K562 (cell line): ENCODE measurements at regions of chr11 and their contacts with region 1.

Region 1: DNA sequence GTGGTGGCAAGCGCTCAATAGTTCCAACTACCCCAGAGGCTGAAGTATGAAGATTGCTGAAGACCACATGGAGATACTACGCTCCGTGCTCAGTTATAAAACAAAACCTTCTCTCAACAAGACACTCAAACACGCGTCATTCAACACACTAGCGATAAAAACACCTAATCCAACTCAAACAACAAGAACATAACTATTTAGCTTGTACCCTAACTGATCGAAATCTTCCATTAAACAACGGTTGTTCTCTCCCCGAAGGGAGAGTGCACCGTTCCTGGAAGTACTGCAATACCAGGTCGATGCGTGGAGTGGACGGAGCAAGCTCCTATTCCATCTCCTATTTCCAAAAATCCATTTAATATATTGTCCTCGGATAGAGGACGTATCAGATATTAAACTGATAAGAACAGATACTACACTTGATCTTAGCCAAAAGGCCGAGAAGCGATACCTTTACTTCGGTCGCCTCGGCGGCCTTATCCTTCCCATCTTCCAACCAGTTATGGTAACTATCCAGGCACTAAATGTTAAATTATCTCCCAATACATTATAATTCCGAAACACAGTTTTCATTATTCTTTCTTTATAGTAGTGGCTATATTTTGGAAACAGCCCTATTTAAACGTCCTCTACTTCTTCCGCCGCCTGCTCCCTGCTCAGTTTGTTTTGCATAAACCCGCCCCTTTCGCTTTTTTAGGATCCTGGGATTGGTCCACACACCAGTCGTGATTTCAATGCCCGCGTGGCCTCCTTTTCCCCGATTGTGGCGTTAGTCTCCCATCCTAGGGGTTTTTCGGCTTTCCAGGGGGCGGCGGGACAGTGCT is 2.2 kb upstream of the WDR74 start:
- DNase-seq: peak; percentile 81 to 96 (median 88)
- ATAC-seq: peak; percentile 89
- H3K4me3 ChIP-seq: peak overlapping the region; percentile 33
- H3K27ac ChIP-seq: peak overlapping the region; percentile 89
- H3K4me1 ChIP-seq: peaks cover 8 to 19% of the 10 kb centered on the region in 2 experiments; a peak in 3 of 5 replicates
- H3K27me3 ChIP-seq: no peaks in the 10 kb centered on the region
- CTCF ChIP-seq: 0 out of 6 replicates have a peak, but pooled peaks of 2 of the 3 experiments have one; percentile 3 to 10
- EP300 ChIP-seq: peak; percentile 82
- POLR2A ChIP-seq: peak; percentile 100
- RAD21 ChIP-seq: peak; percentile 33 to 74; a peak in 3 of 4 replicates

Region 2: DNA sequence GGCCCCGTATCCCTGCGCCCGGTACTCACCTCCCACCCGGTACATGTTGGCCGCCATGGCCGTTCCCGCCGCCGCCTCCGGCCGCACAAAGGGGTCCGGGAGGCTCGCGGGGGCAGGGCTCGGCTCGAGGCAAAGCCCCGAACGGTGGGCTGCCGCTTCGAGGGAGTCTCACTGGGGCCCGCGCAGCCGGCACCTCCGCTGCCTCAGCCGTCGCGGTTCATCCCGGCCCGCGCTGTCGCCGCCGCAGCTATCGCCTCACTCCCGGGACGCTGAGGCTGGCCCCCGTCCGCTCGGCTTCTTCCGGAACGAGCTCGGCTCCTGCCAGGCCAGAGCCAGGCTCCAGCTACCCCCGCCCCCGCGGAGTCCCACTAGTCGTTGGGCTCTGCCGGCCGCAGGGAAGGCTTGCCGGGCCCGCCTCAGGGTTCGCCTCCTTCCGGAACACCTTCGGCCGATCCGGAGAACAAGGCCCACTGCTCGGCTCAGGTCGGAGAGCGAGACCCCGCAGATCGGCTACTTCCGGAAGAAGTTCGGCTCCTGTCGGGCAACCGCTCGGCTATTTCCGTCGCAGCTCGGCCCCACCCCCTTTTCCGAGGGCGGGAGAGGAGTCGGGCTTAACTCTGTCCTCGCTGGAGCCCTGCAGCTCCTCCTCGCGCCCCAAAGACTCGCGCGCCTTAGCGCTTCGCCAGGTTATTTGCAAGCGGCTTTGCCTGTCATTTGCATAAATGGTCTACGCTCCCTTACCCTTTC is 240.0 kb before region 1 on chr11 and contains the start of gene MTA2:
- CTCF ChIA-PET with region 1: no interaction called
- POLR2A ChIA-PET with region 1: interaction called, 10 read pairs
- in situ Hi-C with region 1: no loop called
- intact Hi-C with region 1: no loop called
- DNase-seq: peak; percentile 86 to 99 (median 91)
- ATAC-seq: peak; percentile 94
- H3K4me3 ChIP-seq: peak within 1 kb of the TSS; percentile 95
- H3K27ac ChIP-seq: peak within 1 kb of the TSS; percentile 97
- H3K4me1 ChIP-seq: peaks cover 14 to 43% of the 10 kb centered on the region in 2 experiments; a peak in 4 of 5 replicates
- H3K27me3 ChIP-seq: no peaks in the 10 kb centered on the region
- CTCF ChIP-seq: no peak; a peak in 1 of 6 replicates
- EP300 ChIP-seq: no peak
- POLR2A ChIP-seq: peak; percentile 81
- RAD21 ChIP-seq: no peak
- polyA plus RNA-seq, gene MTA2: 6.2 to 9.9 TPM

Region 3: DNA sequence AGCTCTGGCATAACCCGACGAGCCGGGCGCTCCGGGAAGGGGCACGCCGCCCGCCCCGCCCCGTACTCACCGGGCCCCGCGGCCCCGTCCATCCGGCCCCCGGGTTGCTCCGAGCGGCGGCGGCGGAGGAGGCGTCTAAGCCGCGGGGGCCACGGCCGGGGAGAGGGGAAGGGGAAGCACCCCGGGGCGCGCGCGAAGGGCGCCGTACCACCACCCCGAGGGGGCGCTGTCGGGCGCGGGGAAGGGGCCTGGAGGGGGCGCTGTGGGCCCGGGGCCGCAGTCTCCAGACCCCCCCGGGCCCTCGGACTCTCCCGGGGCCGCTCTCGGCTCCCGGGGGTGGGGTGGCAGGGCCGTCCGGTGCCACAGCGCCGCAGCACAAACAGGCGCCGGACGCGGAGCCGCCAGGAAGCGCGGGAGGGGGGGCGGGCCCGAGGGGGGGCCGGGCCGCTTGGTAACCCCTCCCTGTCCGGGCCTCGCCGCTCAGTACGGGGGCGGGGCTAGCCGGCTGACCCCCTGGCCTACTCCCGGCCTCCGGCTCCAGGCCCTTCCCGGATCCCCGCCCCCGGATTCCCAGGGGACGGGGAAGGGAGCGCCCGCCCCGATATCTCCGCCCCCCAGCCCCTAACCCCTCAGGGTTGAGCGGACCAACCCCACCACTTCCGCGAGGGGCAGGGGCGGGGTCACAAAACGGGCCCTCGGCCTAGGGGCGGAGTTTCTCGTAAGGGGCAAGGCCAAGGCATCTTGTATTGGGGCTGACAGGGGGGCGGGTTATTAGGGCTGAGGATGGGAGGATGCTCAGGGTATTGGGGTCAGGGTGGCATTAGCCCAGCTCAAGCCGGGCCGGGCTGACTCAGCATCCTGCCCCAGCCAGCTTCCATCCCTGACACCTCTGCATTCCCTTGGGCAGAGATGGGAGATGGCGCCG is 228.9 kb before region 1 on chr11 and contains the starts of genes EML3 and ROM1:
- CTCF ChIA-PET with region 1: no interaction called
- POLR2A ChIA-PET with region 1: no interaction called
- in situ Hi-C with region 1: no loop called
- intact Hi-C with region 1: no loop called
- DNase-seq: peak; percentile 91 to 95 (median 92)
- ATAC-seq: peak; percentile 83
- H3K4me3 ChIP-seq: peak within 1 kb of the TSS; percentile 75
- H3K27ac ChIP-seq: peak within 1 kb of the TSS; percentile 90
- H3K4me1 ChIP-seq: peaks cover 29 to 65% of the 10 kb centered on the region in 2 experiments
- H3K27me3 ChIP-seq: no peaks in the 10 kb centered on the region
- CTCF ChIP-seq: peak; percentile 79 to 100 (median 100)
- EP300 ChIP-seq: no peak
- POLR2A ChIP-seq: no peak
- RAD21 ChIP-seq: peak; percentile 56 to 64
- polyA plus RNA-seq, gene EML3: 0.32 to 0.59 TPM
- polyA plus RNA-seq, gene ROM1: 0.75 to 1.4 TPM

Region 4: DNA sequence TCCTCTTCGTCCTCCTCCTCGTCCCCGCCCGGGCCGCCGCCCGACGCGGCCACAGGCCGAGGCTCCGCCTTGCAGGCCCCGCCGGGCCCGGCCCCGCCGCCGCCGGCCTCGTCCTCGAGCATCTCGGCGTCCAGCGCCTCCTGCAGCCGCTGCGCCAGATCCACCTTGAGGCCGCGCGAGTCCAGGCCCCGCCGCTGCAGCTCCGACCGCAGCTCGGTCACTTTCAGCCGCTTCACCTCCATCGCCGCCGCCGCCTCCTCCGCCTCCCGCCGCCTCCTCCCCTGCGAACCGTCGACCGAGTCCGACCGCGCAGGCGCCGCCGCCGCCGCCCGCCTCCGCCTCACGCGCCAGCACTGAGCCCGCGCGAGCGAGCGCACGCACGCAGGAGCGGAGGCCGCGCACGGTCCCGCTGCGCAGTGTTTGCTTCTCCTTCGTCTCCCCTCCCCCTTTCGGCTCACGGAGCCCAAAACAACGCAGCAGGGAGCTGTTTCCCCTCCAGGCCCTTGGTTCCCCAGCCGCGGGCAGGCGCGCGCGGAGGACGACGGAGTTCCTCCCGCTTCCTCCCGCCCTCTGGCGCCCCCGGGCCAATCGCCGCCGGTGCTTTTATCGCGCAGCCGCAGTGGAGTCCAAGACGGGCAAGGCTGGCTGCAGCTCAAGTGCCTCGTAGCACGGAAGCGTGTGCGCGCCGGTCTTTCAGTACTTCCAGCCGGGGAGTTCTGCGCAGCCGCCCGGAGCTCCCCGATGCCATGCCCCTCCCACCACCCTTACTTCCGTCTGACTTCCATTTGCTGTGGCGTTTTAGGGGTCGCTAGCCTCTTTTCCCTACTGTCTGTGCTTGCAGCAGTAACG is 114.4 kb before region 1 on chr11 and contains the start of gene HNRNPUL2:
- CTCF ChIA-PET with region 1: no interaction called
- POLR2A ChIA-PET with region 1: interaction called, 21 read pairs
- in situ Hi-C with region 1: no loop called
- intact Hi-C with region 1: loop called (anchors 10 kb)
- DNase-seq: peak; percentile 94 to 99 (median 96)
- ATAC-seq: peak; percentile 90
- H3K4me3 ChIP-seq: peak within 1 kb of the TSS; percentile 90
- H3K27ac ChIP-seq: peak within 1 kb of the TSS; percentile 99
- H3K4me1 ChIP-seq: peaks cover 13 to 19% of the 10 kb centered on the region in 2 experiments; a peak in 4 of 5 replicates
- H3K27me3 ChIP-seq: no peaks in the 10 kb centered on the region
- CTCF ChIP-seq: peak in 1 of 3 experiments; percentile 40; a peak in 2 of 6 replicates
- EP300 ChIP-seq: peak; percentile 0; the same call in 1 of the 2 replicates
- POLR2A ChIP-seq: peak; percentile 95
- RAD21 ChIP-seq: no peak
- polyA plus RNA-seq, gene HNRNPUL2: 0.89 to 1.4 TPM

Region 5: DNA sequence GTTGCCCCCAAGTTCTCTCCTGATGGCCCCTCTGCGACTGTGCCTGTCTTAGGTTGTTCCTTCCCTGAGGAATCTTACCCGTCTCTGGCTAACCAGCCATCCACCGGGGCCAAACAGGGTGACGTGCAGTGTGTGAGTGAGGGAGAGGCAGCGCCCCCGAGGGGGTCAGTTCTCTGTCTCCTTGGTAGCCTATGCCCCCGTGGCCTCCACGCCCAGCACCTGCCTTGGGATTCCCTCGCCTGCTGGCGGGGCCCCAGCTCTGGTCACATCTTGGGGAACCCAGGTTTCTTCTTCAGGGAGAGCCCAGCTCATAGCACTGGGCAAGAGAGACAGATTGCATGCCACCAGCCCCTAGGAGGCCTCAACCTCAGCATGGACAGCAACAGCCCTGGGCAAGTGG is 42.1 kb before region 1 on chr11:
- CTCF ChIA-PET with region 1: no interaction called
- POLR2A ChIA-PET with region 1: interaction called, 13 read pairs
- in situ Hi-C with region 1: no loop called
- intact Hi-C with region 1: loop called (anchors 2 kb)
- DNase-seq: no peak
- ATAC-seq: no peak
- H3K4me3 ChIP-seq: no peak overlapping the region
- H3K27ac ChIP-seq: no peak overlapping the region
- H3K4me1 ChIP-seq: peaks cover 0 to 8% of the 10 kb centered on the region in 2 experiments; a peak in 2 of 5 replicates
- H3K27me3 ChIP-seq: no peaks in the 10 kb centered on the region
- CTCF ChIP-seq: no peak
- EP300 ChIP-seq: no peak
- POLR2A ChIP-seq: no peak
- RAD21 ChIP-seq: no peak

Region 6: GRCh38 chr11:62855571-62856332 is 14.2 kb after region 1 on chr11:
- CTCF ChIA-PET with region 1: no interaction called
- POLR2A ChIA-PET with region 1: interaction called, 403 read pairs
- in situ Hi-C with region 1: no loop called
- intact Hi-C with region 1: loop called (anchors 2 kb)
- DNase-seq: peak; percentile 92 to 99 (median 96)
- ATAC-seq: peak; percentile 77
- H3K4me3 ChIP-seq: peak overlapping the region; percentile 74
- H3K27ac ChIP-seq: peak overlapping the region; percentile 99
- H3K4me1 ChIP-seq: peaks cover 5 to 21% of the 10 kb centered on the region in 2 experiments; a peak in 3 of 5 replicates
- H3K27me3 ChIP-seq: no peaks in the 10 kb centered on the region
- CTCF ChIP-seq: no peak
- EP300 ChIP-seq: peak; percentile 38; the same call in 1 of the 2 replicates
- POLR2A ChIP-seq: peak; percentile 100
- RAD21 ChIP-seq: no peak; a peak in 1 of 4 replicates

Region 7: GRCh38 chr11:62889484-62890437 is 48.2 kb after region 1 on chr11:
- CTCF ChIA-PET with region 1: no interaction called
- POLR2A ChIA-PET with region 1: interaction called, 74 read pairs
- in situ Hi-C with region 1: no loop called
- intact Hi-C with region 1: no loop called
- DNase-seq: peak; percentile 36 to 90 (median 59)
- ATAC-seq: peak; percentile 73
- H3K4me3 ChIP-seq: no peak overlapping the region
- H3K27ac ChIP-seq: peak overlapping the region; percentile 30
- H3K4me1 ChIP-seq: peaks cover 53 to 65% of the 10 kb centered on the region in 2 experiments
- H3K27me3 ChIP-seq: no peaks in the 10 kb centered on the region
- CTCF ChIP-seq: peak in 1 of 3 experiments; percentile 5; a peak in 1 of 6 replicates
- EP300 ChIP-seq: peak; percentile 66
- POLR2A ChIP-seq: peak; percentile 89
- RAD21 ChIP-seq: peak in 1 of 2 experiments; percentile 14; a peak in 2 of 4 replicates